SK-N-SH (cell line): ENCODE measurements at regions of chr5 and their contacts with region 1.

Region 1: DNA sequence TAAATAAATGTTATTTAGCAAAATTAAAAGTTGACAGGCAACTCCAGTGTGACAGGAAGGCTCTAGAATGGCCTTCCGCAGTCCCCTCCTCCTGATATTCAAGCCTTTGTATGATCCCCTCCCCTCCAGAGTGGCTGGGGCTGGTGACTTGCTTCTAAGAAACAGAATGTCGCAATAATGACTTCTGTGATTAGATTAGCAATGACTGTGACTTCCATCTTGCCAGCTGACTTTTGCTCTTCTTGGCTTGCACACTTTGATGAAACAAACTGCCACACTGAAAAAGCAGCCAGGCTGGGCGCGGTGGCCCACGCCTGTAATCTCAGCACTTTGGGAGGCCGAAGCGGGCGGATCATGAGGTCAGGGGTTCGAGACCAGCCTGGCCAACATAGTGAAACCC is 106.5 kb upstream of the LARP1 start:
- DNase-seq: no peak
- H3K4me3 ChIP-seq: no peak overlapping the region
- H3K27ac ChIP-seq: no peak overlapping the region
- H3K4me1 ChIP-seq: peaks cover 0 to 5% of the 10 kb centered on the region in 2 experiments; a peak in 1 of 4 replicates
- H3K27me3 ChIP-seq: no peaks in the 10 kb centered on the region
- CTCF ChIP-seq: no peak
- EP300 ChIP-seq: no peak
- RAD21 ChIP-seq: no peak

Region 2: GRCh38 chr5:154630410-154630809 is 18.3 kb before region 1 on chr5:
- CTCF ChIA-PET with region 1: interaction called, 13 read pairs
- POLR2A ChIA-PET with region 1: no interaction called
- DNase-seq: no peak
- H3K4me3 ChIP-seq: no peak overlapping the region
- H3K27ac ChIP-seq: no peak overlapping the region
- H3K4me1 ChIP-seq: peaks cover 0 to 5% of the 10 kb centered on the region in 2 experiments; a peak in 1 of 4 replicates
- H3K27me3 ChIP-seq: no peaks in the 10 kb centered on the region; the same call in 1 of the 2 replicates
- CTCF ChIP-seq: no peak
- EP300 ChIP-seq: no peak
- RAD21 ChIP-seq: no peak

Region 3: DNA sequence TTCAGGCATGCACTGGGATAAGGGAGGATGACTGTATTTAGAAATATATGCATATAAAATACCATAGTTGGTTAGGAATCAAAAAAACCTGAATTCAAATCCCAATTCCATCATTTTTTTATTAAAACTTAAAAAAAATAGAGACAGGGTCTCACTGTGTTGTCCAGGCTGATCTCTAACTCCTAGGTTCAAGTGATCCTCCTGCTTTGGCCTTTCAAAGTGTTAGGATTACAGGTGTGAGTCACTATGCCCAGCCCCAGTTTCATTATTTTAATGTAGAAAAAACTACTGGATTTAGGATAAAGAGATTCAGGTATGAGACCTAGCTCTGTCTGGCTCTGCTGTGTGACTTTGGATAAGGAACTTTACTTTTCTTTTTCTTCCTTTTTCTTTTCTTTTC is 103.1 kb after region 1 on chr5:
- CTCF ChIA-PET with region 1: interaction called, 10 read pairs
- POLR2A ChIA-PET with region 1: no interaction called
- DNase-seq: no peak
- H3K4me3 ChIP-seq: no peak overlapping the region
- H3K27ac ChIP-seq: no peak overlapping the region
- H3K4me1 ChIP-seq: peaks cover 6 to 13% of the 10 kb centered on the region in 2 experiments
- H3K27me3 ChIP-seq: no peaks in the 10 kb centered on the region
- CTCF ChIP-seq: no peak
- EP300 ChIP-seq: no peak
- RAD21 ChIP-seq: no peak

Region 4: DNA sequence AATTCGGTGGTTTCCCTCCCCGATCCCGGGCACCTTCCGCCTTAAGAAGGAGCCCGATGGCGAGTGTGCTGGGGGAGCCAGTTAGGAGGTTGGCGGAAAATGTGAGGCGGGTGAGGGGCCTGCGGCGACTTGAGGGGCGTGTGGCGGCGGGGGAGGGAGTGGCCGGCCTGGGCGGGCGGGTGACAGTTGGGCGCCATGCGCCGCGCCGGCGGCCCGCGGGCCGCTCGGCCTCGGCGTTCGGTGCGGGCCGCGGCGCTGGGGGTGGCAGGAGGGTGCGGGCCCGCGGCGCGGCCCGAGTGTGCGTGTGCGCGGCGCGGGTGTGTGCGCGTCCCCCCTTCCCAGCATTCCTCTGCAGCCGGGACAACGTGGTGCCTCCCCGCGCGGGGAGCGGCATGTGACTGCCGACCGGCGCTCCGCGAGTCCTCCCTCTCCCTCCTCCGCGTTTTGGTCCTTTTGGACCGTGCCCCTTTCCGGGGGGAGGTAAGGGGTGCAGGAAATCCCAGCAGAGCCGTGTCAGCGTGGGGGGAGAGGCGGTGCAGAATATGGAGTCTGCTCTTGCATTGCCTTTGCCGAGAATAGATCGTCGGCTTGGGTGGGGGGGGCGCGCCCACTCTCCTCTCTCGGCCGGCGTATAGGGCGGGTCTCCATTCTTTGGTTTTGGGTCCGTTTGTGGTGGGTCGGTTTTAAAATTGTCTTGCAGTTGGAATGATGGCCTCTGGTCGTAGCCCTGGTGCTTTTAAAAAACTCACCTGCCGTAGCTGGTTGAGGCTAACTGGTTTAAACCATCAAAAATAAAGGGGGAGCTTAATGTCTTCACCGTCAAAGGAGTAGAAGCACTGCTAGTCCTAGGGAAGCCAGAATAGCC is 108.3 kb after region 1 on chr5:
- CTCF ChIA-PET with region 1: interaction called, 15 read pairs
- POLR2A ChIA-PET with region 1: no interaction called
- DNase-seq: peak; percentile 77
- H3K4me3 ChIP-seq: peak overlapping the region; percentile 94 to 95
- H3K27ac ChIP-seq: peak overlapping the region; percentile 67 to 92; a peak in 3 of 4 replicates
- H3K4me1 ChIP-seq: peaks cover 21 to 35% of the 10 kb centered on the region in 2 experiments
- H3K27me3 ChIP-seq: no peaks in the 10 kb centered on the region
- CTCF ChIP-seq: no peak
- EP300 ChIP-seq: no peak
- RAD21 ChIP-seq: no peak

Region 5: DNA sequence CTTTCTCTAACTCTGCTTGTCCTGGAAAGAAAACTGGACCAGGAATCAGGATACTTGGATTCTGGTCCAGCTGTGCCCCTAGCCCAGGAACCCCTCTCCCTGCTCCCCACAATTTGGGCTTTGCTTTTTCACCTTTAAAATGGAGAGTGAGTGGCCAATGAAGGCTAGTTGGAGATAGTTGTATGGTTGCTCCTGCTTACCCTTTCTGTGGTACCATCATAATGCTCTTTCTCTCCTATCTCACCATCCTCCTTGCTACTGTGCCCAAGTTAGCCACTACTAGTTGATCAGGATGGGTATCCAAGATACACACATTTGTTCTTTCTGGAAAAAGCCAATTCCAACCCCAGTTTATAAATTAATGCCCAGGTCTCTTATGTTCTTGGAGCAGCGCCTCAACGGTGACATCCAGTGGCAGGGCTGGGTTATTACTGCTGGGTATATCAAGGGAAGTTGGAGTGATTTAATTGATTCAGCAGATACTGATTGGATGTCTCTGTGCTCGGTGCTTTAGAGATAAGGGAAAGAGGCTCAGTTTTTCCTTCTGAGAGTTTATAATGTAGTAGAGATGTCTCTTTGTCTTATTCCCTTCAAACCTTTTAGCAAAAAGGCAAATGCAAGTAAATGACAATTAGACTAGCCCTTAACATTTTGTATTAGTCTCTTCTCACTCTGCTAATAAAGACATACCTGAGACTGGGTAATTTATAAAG is 163.1 kb after region 1 on chr5:
- CTCF ChIA-PET with region 1: interaction called, 33 read pairs
- POLR2A ChIA-PET with region 1: no interaction called
- DNase-seq: peak; percentile 81
- H3K4me3 ChIP-seq: peak overlapping the region in 1 of 2 experiments; percentile 36; a peak in 1 of 4 replicates
- H3K27ac ChIP-seq: no peak overlapping the region
- H3K4me1 ChIP-seq: no peaks in the 10 kb centered on the region; a peak in 1 of 4 replicates
- H3K27me3 ChIP-seq: no peaks in the 10 kb centered on the region
- CTCF ChIP-seq: peak; percentile 96
- EP300 ChIP-seq: no peak
- RAD21 ChIP-seq: peak; percentile 90

Region 6: DNA sequence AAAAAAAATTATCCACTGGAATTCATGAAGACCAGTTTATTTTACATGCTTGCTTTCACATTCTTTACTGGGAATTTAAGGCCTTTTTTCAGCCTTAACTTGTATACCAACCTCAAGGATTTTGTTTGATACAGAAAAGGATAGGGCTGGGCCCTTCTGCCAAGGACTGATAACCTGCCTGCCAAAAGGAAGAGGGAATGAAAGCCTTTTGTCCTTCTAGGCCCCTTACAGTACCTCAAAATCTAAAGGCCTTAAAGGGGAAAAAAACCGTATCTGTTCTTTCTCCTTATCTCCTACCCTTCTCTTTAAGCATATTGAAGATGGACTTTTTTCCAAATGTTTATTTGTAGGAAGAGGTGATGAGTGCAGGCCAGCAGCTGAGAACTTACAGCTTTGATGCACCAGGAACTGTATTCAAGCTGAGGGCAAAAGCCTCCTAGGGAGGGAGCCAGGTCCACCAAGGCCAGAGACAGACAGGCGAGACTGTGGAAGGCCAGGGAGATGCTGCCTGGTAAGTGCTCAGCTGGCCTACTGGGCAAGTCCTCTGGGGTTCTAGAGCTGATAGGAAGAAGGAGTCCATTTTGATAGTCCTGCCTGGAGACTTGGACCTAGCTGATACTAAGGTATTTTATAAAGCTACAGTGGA is 169.9 kb after region 1 on chr5:
- CTCF ChIA-PET with region 1: interaction called, 11 read pairs
- POLR2A ChIA-PET with region 1: no interaction called
- DNase-seq: no peak
- H3K4me3 ChIP-seq: no peak overlapping the region
- H3K27ac ChIP-seq: no peak overlapping the region
- H3K4me1 ChIP-seq: no peaks in the 10 kb centered on the region; a peak in 1 of 4 replicates
- H3K27me3 ChIP-seq: no peaks in the 10 kb centered on the region
- CTCF ChIP-seq: no peak
- EP300 ChIP-seq: no peak
- RAD21 ChIP-seq: no peak

Region 7: GRCh38 chr5:154901276-154901675 is 252.6 kb after region 1 on chr5:
- CTCF ChIA-PET with region 1: interaction called, 14 read pairs
- POLR2A ChIA-PET with region 1: no interaction called
- DNase-seq: no peak
- H3K4me3 ChIP-seq: no peak overlapping the region
- H3K27ac ChIP-seq: no peak overlapping the region
- H3K4me1 ChIP-seq: no peaks in the 10 kb centered on the region
- H3K27me3 ChIP-seq: no peaks in the 10 kb centered on the region
- CTCF ChIP-seq: no peak
- EP300 ChIP-seq: no peak
- RAD21 ChIP-seq: no peak

Region 8: GRCh38 chr5:155076379-155076778 is 427.7 kb after region 1 on chr5:
- CTCF ChIA-PET with region 1: no interaction called
- POLR2A ChIA-PET with region 1: no interaction called
- DNase-seq: no peak
- H3K4me3 ChIP-seq: no peak overlapping the region
- H3K27ac ChIP-seq: no peak overlapping the region
- H3K4me1 ChIP-seq: no peaks in the 10 kb centered on the region; a peak in 1 of 4 replicates
- H3K27me3 ChIP-seq: no peaks in the 10 kb centered on the region
- CTCF ChIP-seq: no peak
- EP300 ChIP-seq: no peak
- RAD21 ChIP-seq: no peak